ENCODE measurements at regions of chr16 and their contacts with region 1.

Region 1: DNA sequence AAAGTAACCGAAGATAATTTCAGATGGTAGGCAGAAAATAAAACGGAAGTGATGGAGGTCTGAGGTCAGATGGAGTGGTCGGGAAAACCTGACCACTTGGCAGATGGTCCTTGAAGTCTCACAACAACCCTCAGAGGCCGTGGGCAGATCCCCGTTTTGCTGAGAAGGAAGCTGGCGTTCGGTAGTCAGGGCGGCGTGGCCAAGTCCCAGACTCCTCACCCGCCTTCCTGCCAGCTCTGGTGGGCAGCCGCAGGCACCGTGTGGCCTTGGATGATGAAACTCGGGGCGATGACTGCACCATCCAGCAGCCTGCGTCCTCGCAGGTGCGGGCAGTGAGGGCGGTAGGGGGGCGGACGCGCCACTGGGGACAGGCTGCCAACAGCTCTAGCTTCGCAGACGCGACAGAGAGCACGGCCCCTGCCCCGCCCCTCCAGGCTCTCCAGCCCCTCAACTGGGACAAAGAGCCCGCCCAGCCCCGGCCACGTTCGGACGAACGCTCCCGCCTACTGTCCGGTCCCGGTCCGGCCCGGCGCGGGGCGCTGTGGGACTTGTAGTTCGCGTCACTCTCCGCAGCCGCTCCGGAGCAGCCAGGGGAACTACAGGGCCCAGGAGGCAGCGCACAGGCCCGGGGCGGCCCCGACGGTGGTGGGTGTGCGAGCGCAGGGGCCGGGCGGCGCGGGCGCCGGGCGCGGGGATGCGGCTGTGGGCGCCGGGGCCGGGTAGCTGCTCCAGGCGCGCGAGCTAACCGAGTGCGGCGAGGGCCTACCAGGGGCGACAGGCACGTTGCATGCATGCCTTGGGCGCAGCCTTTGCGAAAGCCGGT is at the start of gene GPT2:
- DNase-seq: peak; percentile 35 to 81 (median 55)
- ATAC-seq: peak; percentile 91
- H3K4me3 ChIP-seq: peak within 1 kb of the TSS; percentile 58
- H3K4me3 Mint-ChIP-seq: peak within 1 kb of the TSS; percentile 88
- H3K27ac ChIP-seq: no peak within 1 kb of the TSS
- H3K27ac Mint-ChIP-seq: no peak within 1 kb of the TSS
- H3K4me1 ChIP-seq: peaks cover 12% of the 10 kb centered on the region
- H3K4me1 Mint-ChIP-seq: peaks cover 17% of the 10 kb centered on the region
- H3K27me3 ChIP-seq: peaks cover 0 to 6% of the 10 kb centered on the region in 2 experiments
- H3K27me3 Mint-ChIP-seq: peaks cover 13% of the 10 kb centered on the region
- CTCF ChIP-seq: no peak
- total RNA-seq, gene GPT2: 0.47 TPM in 1 of 2 experiments, not detected in the other

Region 2: GRCh38 chr16:46689365-46690280 is 194.3 kb before region 1 on chr16 and contains the start of gene ORC6:
- CTCF ChIA-PET with region 1: no interaction called
- POLR2A ChIA-PET with region 1: interaction called, 3 read pairs
- intact Hi-C with region 1: loop called in 1 of 2 experiments (anchors 2 kb)
- DNase-seq: peak; percentile 92 to 97 (median 96)
- ATAC-seq: peak; percentile 72
- H3K4me3 ChIP-seq: peak within 1 kb of the TSS; percentile 94
- H3K4me3 Mint-ChIP-seq: no peak within 1 kb of the TSS
- H3K27ac ChIP-seq: peak within 1 kb of the TSS; percentile 91 to 98
- H3K27ac Mint-ChIP-seq: no peak within 1 kb of the TSS
- H3K4me1 ChIP-seq: peaks cover 23% of the 10 kb centered on the region
- H3K4me1 Mint-ChIP-seq: peaks cover 33% of the 10 kb centered on the region
- H3K27me3 ChIP-seq: no peaks in the 10 kb centered on the region
- H3K27me3 Mint-ChIP-seq: no peaks in the 10 kb centered on the region
- CTCF ChIP-seq: no peak
- total RNA-seq, gene ORC6: 3.7 to 3.8 TPM

Region 3: GRCh38 chr16:46789499-46790414 is 94.1 kb before region 1 on chr16:
- CTCF ChIA-PET with region 1: no interaction called
- POLR2A ChIA-PET with region 1: no interaction called
- intact Hi-C with region 1: loop called in 1 of 2 experiments (anchors 5 kb)
- DNase-seq: peak; percentile 66 to 88 (median 77)
- ATAC-seq: peak; percentile 97
- H3K4me3 ChIP-seq: peak overlapping the region; percentile 68
- H3K4me3 Mint-ChIP-seq: peak overlapping the region; percentile 79
- H3K27ac ChIP-seq: peak overlapping the region in 1 of 2 donors; percentile 48
- H3K27ac Mint-ChIP-seq: peak overlapping the region; percentile 30
- H3K4me1 ChIP-seq: peaks cover 11% of the 10 kb centered on the region
- H3K4me1 Mint-ChIP-seq: peaks cover 19% of the 10 kb centered on the region
- H3K27me3 ChIP-seq: no peaks in the 10 kb centered on the region
- H3K27me3 Mint-ChIP-seq: no peaks in the 10 kb centered on the region
- CTCF ChIP-seq: no peak

Region 4: GRCh38 chr16:46961373-46962353 is 77.8 kb after region 1 on chr16:
- CTCF ChIA-PET with region 1: no interaction called
- POLR2A ChIA-PET with region 1: no interaction called
- intact Hi-C with region 1: loop called in 1 of 2 experiments (anchors 2 kb)
- DNase-seq: peak in 3 of 14 experiments; percentile 43 to 58 (median 48)
- ATAC-seq: peak; percentile 84
- H3K4me3 ChIP-seq: no peak overlapping the region
- H3K4me3 Mint-ChIP-seq: no peak overlapping the region
- H3K27ac ChIP-seq: no peak overlapping the region
- H3K27ac Mint-ChIP-seq: peak overlapping the region; percentile 88
- H3K4me1 ChIP-seq: peaks cover 5% of the 10 kb centered on the region
- H3K4me1 Mint-ChIP-seq: peaks cover 33% of the 10 kb centered on the region
- H3K27me3 ChIP-seq: no peaks in the 10 kb centered on the region
- H3K27me3 Mint-ChIP-seq: no peaks in the 10 kb centered on the region
- CTCF ChIP-seq: no peak

Region 5: DNA sequence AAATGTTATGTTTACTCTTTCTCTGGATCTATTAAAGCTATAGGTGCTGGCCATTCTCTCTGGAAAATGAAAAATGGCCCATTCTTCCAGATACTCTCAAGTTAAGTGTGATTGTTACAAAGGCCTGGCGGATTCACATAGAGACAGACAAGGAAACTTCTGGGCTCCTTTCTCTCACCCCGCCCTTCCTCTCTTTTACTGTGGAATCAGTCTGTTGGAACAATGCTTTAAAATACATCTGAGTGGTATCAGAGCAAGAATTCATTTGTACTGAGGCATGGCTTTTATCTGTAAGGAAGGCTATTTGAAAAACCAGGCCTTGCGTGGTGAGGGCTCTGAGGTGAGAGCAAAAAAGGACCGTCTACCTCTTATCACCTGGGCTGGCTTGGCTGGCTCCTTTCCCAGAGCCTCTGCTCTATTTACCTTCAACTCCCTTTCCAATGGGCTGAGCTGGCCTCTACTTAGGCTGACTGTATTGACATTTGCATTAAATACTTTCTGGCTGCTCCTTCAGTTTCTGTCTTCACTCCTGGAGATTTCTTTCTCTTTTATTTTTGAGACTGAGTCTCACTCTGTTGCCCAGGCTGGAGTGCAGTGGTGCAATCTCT is 851.2 kb after region 1 on chr16:
- CTCF ChIA-PET with region 1: no interaction called
- POLR2A ChIA-PET with region 1: no interaction called
- intact Hi-C with region 1: no loop called
- DNase-seq: no peak
- ATAC-seq: no peak
- H3K4me3 ChIP-seq: no peak overlapping the region
- H3K4me3 Mint-ChIP-seq: no peak overlapping the region
- H3K27ac ChIP-seq: no peak overlapping the region
- H3K27ac Mint-ChIP-seq: no peak overlapping the region
- H3K4me1 ChIP-seq: no peaks in the 10 kb centered on the region
- H3K4me1 Mint-ChIP-seq: no peaks in the 10 kb centered on the region
- H3K27me3 ChIP-seq: no peaks in the 10 kb centered on the region
- H3K27me3 Mint-ChIP-seq: peaks cover 14% of the 10 kb centered on the region
- CTCF ChIP-seq: no peak